HCT116 (cell line): ENCODE measurements at regions of chr22 and their contacts with region 1.

Region 1: DNA sequence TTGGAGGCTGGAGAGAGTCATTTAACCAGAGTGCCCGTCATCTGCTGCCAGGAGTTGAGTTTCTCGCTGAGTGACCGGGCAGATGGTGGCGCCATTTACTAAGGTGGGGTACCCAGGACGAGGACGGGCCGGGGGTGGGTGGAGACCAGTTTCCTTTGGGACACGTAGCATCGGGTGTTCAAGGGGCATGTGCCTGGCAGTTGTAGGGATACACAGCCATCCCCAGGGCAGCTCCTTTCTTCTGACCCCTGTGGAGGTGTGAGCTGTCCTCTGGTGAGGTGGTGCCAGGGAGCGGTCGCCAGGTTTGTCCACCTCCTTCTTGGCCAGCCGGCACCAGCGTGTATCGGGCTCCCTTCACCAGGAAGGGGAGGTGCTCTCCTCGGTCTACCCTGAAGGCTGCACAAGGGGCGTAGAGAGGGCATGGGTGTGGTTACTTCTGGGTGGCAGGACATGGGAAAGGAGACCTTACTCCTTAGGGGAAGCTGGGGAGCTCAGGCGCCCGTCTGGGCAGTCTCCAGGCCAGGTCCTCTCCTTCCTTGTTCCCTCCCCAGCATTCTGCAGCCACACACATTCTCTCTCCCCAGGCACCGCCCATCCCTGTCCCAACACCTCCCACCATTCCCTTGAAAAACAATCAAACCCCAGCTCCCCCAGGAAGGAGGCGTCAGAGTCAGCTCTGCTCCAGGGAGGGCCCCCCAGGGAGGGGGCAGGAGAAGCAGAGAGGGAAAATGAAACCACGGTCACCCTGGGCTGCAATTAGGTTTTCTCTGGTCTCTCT is 10.3 kb upstream of the MB start:
- DNase-seq: peak; percentile 69
- ATAC-seq: peak; percentile 68
- H3K4me3 ChIP-seq: peak overlapping the region; percentile 54 to 60
- H3K27ac ChIP-seq: peak overlapping the region; percentile 89
- H3K4me1 ChIP-seq: peaks cover 41 to 67% of the 10 kb centered on the region in 2 experiments
- H3K27me3 ChIP-seq: no peaks in the 10 kb centered on the region
- CTCF ChIP-seq: peak; percentile 29 to 92 (median 61); a peak in 5 of 6 replicates
- POLR2A ChIP-seq: peak; percentile 39
- RAD21 ChIP-seq: peak; percentile 97

Region 2: DNA sequence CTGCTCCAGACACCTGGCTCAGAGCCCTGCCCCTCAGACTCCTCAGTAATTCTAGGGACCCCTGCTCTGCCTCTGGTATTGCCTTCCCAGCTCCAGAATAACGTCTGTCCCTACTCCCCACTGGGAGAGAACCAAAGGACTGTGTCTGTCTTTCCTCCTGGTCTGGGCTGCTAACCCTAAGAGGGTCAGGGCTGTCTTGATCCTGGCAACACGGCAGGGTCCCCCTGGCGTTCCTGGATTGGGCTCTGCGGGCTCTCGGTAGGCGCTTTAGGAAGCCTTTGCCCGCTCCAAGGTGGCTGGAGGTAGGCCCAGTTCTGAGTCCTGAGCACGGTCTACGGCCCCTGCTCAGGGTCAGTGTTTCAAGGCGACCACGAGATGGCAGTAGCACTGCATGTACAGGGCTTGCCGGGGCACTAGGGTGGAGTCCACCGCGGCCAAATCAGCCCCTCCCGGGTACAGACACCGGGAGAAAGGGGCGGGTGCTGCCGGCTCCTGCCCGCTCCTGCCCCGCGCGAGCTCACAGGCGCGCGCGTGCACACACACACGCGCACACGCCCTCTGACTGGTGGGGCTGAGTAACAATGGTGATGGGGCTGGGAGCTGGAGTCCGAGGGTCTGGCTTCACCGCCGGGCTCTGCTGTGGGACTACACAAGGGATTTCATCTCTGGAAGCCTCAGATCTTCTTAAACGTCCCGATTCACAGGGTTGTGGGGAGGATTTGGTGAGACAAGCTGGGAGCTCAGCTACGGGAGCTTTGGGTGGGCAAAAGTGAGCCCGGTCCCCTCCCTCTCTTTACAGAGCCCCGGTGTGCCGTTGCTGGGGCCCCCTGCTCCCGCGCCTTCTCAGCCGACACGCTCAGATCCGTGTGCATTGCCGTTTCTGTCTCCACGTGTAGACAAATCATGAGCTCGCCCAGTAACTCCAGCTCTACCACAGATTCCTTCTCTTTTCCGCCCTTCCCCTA is 276.6 kb before region 1 on chr22:
- CTCF ChIA-PET with region 1: interaction called, 6 read pairs
- POLR2A ChIA-PET with region 1: no interaction called
- RAD21 ChIA-PET with region 1: no interaction called
- intact Hi-C with region 1: loop called (anchors 1 kb)
- DNase-seq: peak; percentile 81
- ATAC-seq: peak; percentile 99
- H3K4me3 ChIP-seq: peak overlapping the region; percentile 20 to 47; a peak in 3 of 4 replicates
- H3K27ac ChIP-seq: peak overlapping the region; percentile 34; the same call in 1 of the 2 replicates
- H3K4me1 ChIP-seq: peaks cover 2 to 27% of the 10 kb centered on the region in 2 experiments; a peak in 3 of 4 replicates
- H3K27me3 ChIP-seq: no peaks in the 10 kb centered on the region
- CTCF ChIP-seq: peak; percentile 54 to 75 (median 70)
- POLR2A ChIP-seq: peak; percentile 28
- RAD21 ChIP-seq: peak; percentile 97

Region 3: GRCh38 chr22:35430897-35431322 is 196.5 kb before region 1 on chr22:
- CTCF ChIA-PET with region 1: interaction called, 9 read pairs
- POLR2A ChIA-PET with region 1: no interaction called
- RAD21 ChIA-PET with region 1: no interaction called
- intact Hi-C with region 1: loop called (anchors 1 kb)
- DNase-seq: peak; percentile 32
- ATAC-seq: peak; percentile 88
- H3K4me3 ChIP-seq: no peak overlapping the region
- H3K27ac ChIP-seq: peak overlapping the region; percentile 13; the same call in 1 of the 2 replicates
- H3K4me1 ChIP-seq: peaks cover 11 to 14% of the 10 kb centered on the region in 2 experiments
- H3K27me3 ChIP-seq: no peaks in the 10 kb centered on the region
- CTCF ChIP-seq: peak; percentile 75 to 98 (median 94)
- POLR2A ChIP-seq: no peak
- RAD21 ChIP-seq: peak; percentile 88

Region 4: GRCh38 chr22:35477911-35478582 is 149.4 kb before region 1 on chr22:
- CTCF ChIA-PET with region 1: no interaction called
- POLR2A ChIA-PET with region 1: no interaction called
- RAD21 ChIA-PET with region 1: no interaction called
- intact Hi-C with region 1: no loop called
- DNase-seq: peak; percentile 27
- ATAC-seq: peak; percentile 56
- H3K4me3 ChIP-seq: peak overlapping the region in 1 of 2 experiments; percentile 28; a peak in 1 of 4 replicates
- H3K27ac ChIP-seq: peak overlapping the region; percentile 69
- H3K4me1 ChIP-seq: peaks cover 14 to 26% of the 10 kb centered on the region in 2 experiments
- H3K27me3 ChIP-seq: no peaks in the 10 kb centered on the region
- CTCF ChIP-seq: no peak
- POLR2A ChIP-seq: no peak
- RAD21 ChIP-seq: no peak

Region 5: DNA sequence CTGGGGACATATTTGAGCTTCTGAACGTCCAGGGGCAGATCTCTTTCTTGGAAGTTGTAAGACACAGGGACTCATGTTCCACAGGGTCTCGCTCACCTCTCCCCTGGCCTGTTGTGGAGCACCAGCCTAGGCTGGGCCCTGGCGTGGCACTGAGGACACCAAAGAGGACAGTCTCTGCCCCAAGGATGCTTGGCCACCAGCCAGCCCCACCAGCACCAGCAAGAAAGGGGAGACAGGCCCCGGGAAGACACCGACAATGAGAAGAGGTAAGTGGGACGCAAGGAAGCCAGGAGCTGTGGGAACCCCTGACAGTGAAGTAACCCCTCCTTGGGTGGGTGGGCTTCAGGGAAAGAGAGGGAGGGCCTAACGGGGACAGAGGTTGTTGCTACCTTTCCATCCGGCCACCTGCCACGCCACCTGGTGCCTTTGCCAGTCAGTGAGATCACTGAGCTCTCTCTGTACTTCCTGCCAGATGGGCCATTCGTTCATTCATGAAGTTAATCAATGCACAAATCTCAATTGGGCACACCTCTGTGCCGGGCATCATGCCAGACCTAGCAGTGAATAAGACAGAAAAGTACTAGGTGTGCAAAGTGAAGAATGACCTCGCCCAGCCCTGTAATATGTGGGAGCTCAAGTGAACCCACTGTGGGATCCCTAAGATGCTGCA is 101.3 kb after region 1 on chr22:
- CTCF ChIA-PET with region 1: no interaction called
- POLR2A ChIA-PET with region 1: no interaction called
- RAD21 ChIA-PET with region 1: no interaction called
- intact Hi-C with region 1: no loop called
- DNase-seq: no peak
- ATAC-seq: no peak
- H3K4me3 ChIP-seq: no peak overlapping the region
- H3K27ac ChIP-seq: no peak overlapping the region
- H3K4me1 ChIP-seq: no peaks in the 10 kb centered on the region
- H3K27me3 ChIP-seq: no peaks in the 10 kb centered on the region
- CTCF ChIP-seq: no peak
- POLR2A ChIP-seq: no peak
- RAD21 ChIP-seq: no peak

Region 6: GRCh38 chr22:35840302-35840739 is 212.9 kb after region 1 on chr22:
- CTCF ChIA-PET with region 1: interaction called, 7 read pairs
- POLR2A ChIA-PET with region 1: interaction called, 8 read pairs
- RAD21 ChIA-PET with region 1: interaction called in 1 of 2 experiments, 3 read pairs
- intact Hi-C with region 1: loop called (anchors 2 kb)
- DNase-seq: peak; percentile 95
- ATAC-seq: peak; percentile 90
- H3K4me3 ChIP-seq: peak overlapping the region; percentile 53 to 69
- H3K27ac ChIP-seq: peak overlapping the region; percentile 46; the same call in 1 of the 2 replicates
- H3K4me1 ChIP-seq: peaks cover 46 to 75% of the 10 kb centered on the region in 2 experiments
- H3K27me3 ChIP-seq: no peaks in the 10 kb centered on the region
- CTCF ChIP-seq: no peak
- POLR2A ChIP-seq: no peak
- RAD21 ChIP-seq: peak; percentile 15; the same call in 1 of the 2 replicates

Region 7: DNA sequence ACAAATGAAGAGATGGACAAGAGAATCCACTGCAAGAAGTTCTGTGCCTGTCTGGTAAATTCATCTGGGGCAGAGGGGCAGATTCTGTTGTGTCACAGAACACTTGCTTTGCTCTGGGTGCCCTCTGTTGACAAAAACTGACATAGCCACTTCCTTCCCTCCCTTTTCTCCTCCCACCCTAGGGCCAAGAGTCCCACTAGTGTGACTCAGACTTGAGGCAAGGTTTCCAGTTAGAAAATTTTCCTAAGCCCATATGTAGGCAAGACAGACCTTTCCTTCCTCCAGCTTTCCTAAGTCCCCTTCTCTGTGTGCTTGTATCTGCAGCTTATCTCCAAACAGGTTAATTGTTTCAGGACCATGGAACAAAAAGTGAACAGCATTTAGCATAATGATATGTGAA is 294.3 kb after region 1 on chr22:
- CTCF ChIA-PET with region 1: interaction called, 11 read pairs
- POLR2A ChIA-PET with region 1: no interaction called
- RAD21 ChIA-PET with region 1: no interaction called
- intact Hi-C with region 1: loop called (anchors 1 kb)
- DNase-seq: peak; percentile 76
- ATAC-seq: peak; percentile 99
- H3K4me3 ChIP-seq: no peak overlapping the region
- H3K27ac ChIP-seq: peak overlapping the region; percentile 53
- H3K4me1 ChIP-seq: peaks cover 7 to 27% of the 10 kb centered on the region in 2 experiments
- H3K27me3 ChIP-seq: no peaks in the 10 kb centered on the region
- CTCF ChIP-seq: peak; percentile 50 to 81 (median 75)
- POLR2A ChIP-seq: no peak
- RAD21 ChIP-seq: peak; percentile 90

Region 8: GRCh38 chr22:36065775-36066559 is 438.5 kb after region 1 on chr22:
- CTCF ChIA-PET with region 1: interaction called, 19 read pairs
- POLR2A ChIA-PET with region 1: interaction called, 4 read pairs
- RAD21 ChIA-PET with region 1: no interaction called
- intact Hi-C with region 1: loop called (anchors 2 kb)
- DNase-seq: peak; percentile 91
- ATAC-seq: peak; percentile 93
- H3K4me3 ChIP-seq: peak overlapping the region; percentile 62 to 64
- H3K27ac ChIP-seq: peak overlapping the region; percentile 64
- H3K4me1 ChIP-seq: peaks cover 4 to 21% of the 10 kb centered on the region in 2 experiments; a peak in 3 of 4 replicates
- H3K27me3 ChIP-seq: no peaks in the 10 kb centered on the region
- CTCF ChIP-seq: peak; percentile 99 to 100 (median 100)
- POLR2A ChIP-seq: no peak
- RAD21 ChIP-seq: peak; percentile 84